K562 (cell line): ENCODE measurements at regions of chr17 and their contacts with region 1.

Region 1: GRCh38 chr17:40075201-40075941 is 12.6 kb downstream of the THRA start:
- DNase-seq: peak; percentile 71 to 86 (median 76)
- ATAC-seq: peak; percentile 84
- H3K4me3 ChIP-seq: no peak overlapping the region
- H3K27ac ChIP-seq: peak overlapping the region; percentile 73
- H3K4me1 ChIP-seq: peaks cover 61 to 62% of the 10 kb centered on the region in 2 experiments
- H3K27me3 ChIP-seq: no peaks in the 10 kb centered on the region
- CTCF ChIP-seq: peak; percentile 83 to 93 (median 86)
- EP300 ChIP-seq: peak; percentile 52
- POLR2A ChIP-seq: no peak
- RAD21 ChIP-seq: peak; percentile 53 to 68

Region 2: GRCh38 chr17:40064971-40065768 is 10.2 kb before region 1 on chr17:
- CTCF ChIA-PET with region 1: interaction called, 4 read pairs
- POLR2A ChIA-PET with region 1: interaction called, 29 read pairs
- in situ Hi-C with region 1: no loop called
- intact Hi-C with region 1: no loop called
- DNase-seq: no peak
- ATAC-seq: no peak
- H3K4me3 ChIP-seq: no peak overlapping the region; the same call in 1 of the 2 replicates
- H3K27ac ChIP-seq: peak overlapping the region; percentile 18; the same call in 1 of the 3 replicates
- H3K4me1 ChIP-seq: peaks cover 58 to 81% of the 10 kb centered on the region in 2 experiments
- H3K27me3 ChIP-seq: no peaks in the 10 kb centered on the region
- CTCF ChIP-seq: no peak
- EP300 ChIP-seq: no peak
- POLR2A ChIP-seq: no peak
- RAD21 ChIP-seq: no peak

Region 3: GRCh38 chr17:40098846-40099618 is 23.7 kb after region 1 on chr17:
- CTCF ChIA-PET with region 1: interaction called, 3 read pairs
- POLR2A ChIA-PET with region 1: interaction called, 17 read pairs
- in situ Hi-C with region 1: no loop called
- intact Hi-C with region 1: no loop called
- DNase-seq: peak; percentile 97 to 100 (median 98)
- ATAC-seq: peak; percentile 90
- H3K4me3 ChIP-seq: peak overlapping the region; percentile 53
- H3K27ac ChIP-seq: peak overlapping the region; percentile 100
- H3K4me1 ChIP-seq: peaks cover 45 to 51% of the 10 kb centered on the region in 2 experiments
- H3K27me3 ChIP-seq: no peaks in the 10 kb centered on the region
- CTCF ChIP-seq: no peak
- EP300 ChIP-seq: peak; percentile 68
- POLR2A ChIP-seq: no peak; the same call in none of the 2 replicates
- RAD21 ChIP-seq: no peak

Region 4: GRCh38 chr17:40301315-40301714 is 225.9 kb after region 1 on chr17:
- CTCF ChIA-PET with region 1: no interaction called
- POLR2A ChIA-PET with region 1: no interaction called
- in situ Hi-C with region 1: no loop called
- intact Hi-C with region 1: no loop called
- DNase-seq: peak in 1 of 4 experiments; percentile 35
- ATAC-seq: peak; percentile 35; the same call in 1 of the 3 replicates
- H3K4me3 ChIP-seq: no peak overlapping the region
- H3K27ac ChIP-seq: no peak overlapping the region
- H3K4me1 ChIP-seq: peaks cover 3 to 7% of the 10 kb centered on the region in 2 experiments; a peak in 4 of 5 replicates
- H3K27me3 ChIP-seq: no peaks in the 10 kb centered on the region
- CTCF ChIP-seq: peak; percentile 32 to 48 (median 40); a peak in 4 of 6 replicates
- EP300 ChIP-seq: no peak
- POLR2A ChIP-seq: no peak
- RAD21 ChIP-seq: peak; percentile 28 to 52